ENCODE measurements at regions of chr14 and their contacts with region 1.

Region 1: DNA sequence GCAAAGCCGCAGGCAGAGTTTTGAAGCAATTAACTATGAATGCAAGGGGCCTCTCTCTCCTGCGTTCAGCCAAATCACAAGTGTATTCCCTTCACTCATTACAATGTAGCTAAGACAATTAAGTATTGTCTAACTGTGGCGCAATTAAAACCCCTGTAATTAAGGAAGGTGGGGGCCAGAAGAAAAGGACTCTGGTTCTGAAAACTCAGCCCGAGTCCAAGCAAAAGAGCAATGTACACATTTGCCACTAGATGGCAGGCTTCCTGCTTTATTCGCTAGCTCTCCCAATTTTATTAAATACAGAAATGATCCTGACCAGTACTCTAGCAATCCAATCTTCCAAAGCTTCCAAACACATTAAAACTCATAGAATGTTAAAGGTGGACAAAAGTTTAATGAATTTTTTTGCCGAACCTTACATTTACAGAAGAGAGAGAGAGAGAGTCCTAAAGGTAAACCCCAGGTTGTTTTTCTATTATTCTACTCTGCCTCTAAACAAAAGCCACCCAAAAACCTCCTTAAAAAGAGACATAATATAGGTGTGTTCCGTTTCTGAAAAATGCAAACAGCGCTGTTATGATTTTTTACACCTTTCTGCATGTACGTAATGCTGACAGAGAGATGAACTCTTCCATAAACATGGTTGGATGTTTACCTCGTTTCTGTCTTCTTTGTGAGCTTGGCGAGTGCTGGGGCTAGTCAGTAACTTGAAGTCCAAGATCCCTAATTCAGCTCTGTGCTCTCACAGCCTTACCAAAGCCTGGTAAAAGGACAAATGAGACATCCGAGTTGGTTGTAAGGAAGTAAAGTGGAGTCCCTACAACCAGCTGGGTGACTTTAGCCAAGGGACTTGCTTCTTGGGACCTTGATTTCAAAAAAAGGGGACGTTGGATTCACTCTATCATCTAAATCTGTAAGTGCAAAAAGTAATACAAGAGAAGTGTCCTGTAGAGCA is 50.9 kb upstream of the VASH1 start:
- DNase-seq: peak; percentile 59
- ATAC-seq: peak; percentile 88
- H3K4me3 ChIP-seq: no peak overlapping the region
- H3K27ac ChIP-seq: no peak overlapping the region
- H3K4me1 ChIP-seq: no peaks in the 10 kb centered on the region
- H3K27me3 ChIP-seq: peaks cover 2% of the 10 kb centered on the region; the same call in 1 of the 2 replicates
- CTCF ChIP-seq: peak; percentile 72
- POLR2A ChIP-seq: no peak
- RAD21 ChIP-seq: peak; percentile 80

Region 2: GRCh38 chr14:76761136-76761959 is 51.0 kb after region 1 on chr14 and contains the start of gene VASH1:
- CTCF ChIA-PET with region 1: interaction called, 6 read pairs
- POLR2A ChIA-PET with region 1: no interaction called
- dilution Hi-C with region 1: no loop called
- in situ Hi-C with region 1: no loop called
- intact Hi-C with region 1: loop called (anchors 1 kb)
- DNase-seq: peak; percentile 76
- ATAC-seq: peak; percentile 92
- H3K4me3 ChIP-seq: peak within 1 kb of the TSS; percentile 87
- H3K27ac ChIP-seq: peak within 1 kb of the TSS; percentile 80
- H3K4me1 ChIP-seq: peaks cover 8% of the 10 kb centered on the region; the same call in 1 of the 2 replicates
- H3K27me3 ChIP-seq: no peaks in the 10 kb centered on the region; the same call in 1 of the 2 replicates
- CTCF ChIP-seq: 0 out of 2 replicates have a peak, but pooled peaks have one; percentile 6
- POLR2A ChIP-seq: no peak
- RAD21 ChIP-seq: no peak
- total RNA-seq, gene VASH1: 1.9 and 2.0 TPM in 2 replicates

Region 3: GRCh38 chr14:76784266-76785264 is 74.2 kb after region 1 on chr14:
- CTCF ChIA-PET with region 1: interaction called, 17 read pairs
- POLR2A ChIA-PET with region 1: no interaction called
- dilution Hi-C with region 1: no loop called
- in situ Hi-C with region 1: loop called (anchors 5 kb)
- intact Hi-C with region 1: loop called (anchors 1 kb)
- DNase-seq: peak; percentile 75
- ATAC-seq: peak; percentile 96
- H3K4me3 ChIP-seq: no peak overlapping the region
- H3K27ac ChIP-seq: no peak overlapping the region
- H3K4me1 ChIP-seq: peaks cover 4% of the 10 kb centered on the region; the same call in 1 of the 2 replicates
- H3K27me3 ChIP-seq: no peaks in the 10 kb centered on the region
- CTCF ChIP-seq: peak; percentile 96
- POLR2A ChIP-seq: no peak
- RAD21 ChIP-seq: peak; percentile 84

Region 4: GRCh38 chr14:76810953-76811400 is 100.6 kb after region 1 on chr14:
- CTCF ChIA-PET with region 1: interaction called, 15 read pairs
- POLR2A ChIA-PET with region 1: no interaction called
- dilution Hi-C with region 1: no loop called
- in situ Hi-C with region 1: no loop called
- intact Hi-C with region 1: loop called (anchors 1 kb)
- DNase-seq: peak; percentile 34
- ATAC-seq: peak; percentile 57
- H3K4me3 ChIP-seq: peak overlapping the region; percentile 22; the same call in 1 of the 2 replicates
- H3K27ac ChIP-seq: no peak overlapping the region
- H3K4me1 ChIP-seq: no peaks in the 10 kb centered on the region
- H3K27me3 ChIP-seq: no peaks in the 10 kb centered on the region
- CTCF ChIP-seq: peak; percentile 51
- POLR2A ChIP-seq: no peak
- RAD21 ChIP-seq: peak; percentile 57

Region 5: DNA sequence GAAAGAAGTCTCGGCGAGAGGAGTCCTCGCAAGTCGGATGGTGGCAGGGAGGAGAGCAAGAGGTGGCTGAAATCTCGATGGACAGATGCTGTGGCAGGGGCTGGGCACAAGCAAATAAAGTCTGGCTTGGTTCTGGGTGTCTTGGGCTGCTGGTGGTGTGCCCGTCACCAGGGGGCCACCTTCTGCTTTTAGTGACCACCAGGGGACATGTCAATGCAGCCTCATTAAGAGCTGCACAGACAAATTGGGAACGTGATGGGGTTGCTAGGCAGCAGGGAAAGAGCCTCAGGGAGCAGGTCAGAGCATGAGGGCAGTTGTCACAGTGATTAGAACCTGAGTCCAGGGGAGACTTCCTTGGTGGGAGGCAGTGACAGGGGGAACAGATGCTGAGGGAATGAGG is 159.8 kb after region 1 on chr14:
- CTCF ChIA-PET with region 1: no interaction called
- POLR2A ChIA-PET with region 1: no interaction called
- dilution Hi-C with region 1: no loop called
- in situ Hi-C with region 1: no loop called
- intact Hi-C with region 1: loop called (anchors 2 kb)
- DNase-seq: no peak
- ATAC-seq: no peak
- H3K4me3 ChIP-seq: no peak overlapping the region
- H3K27ac ChIP-seq: no peak overlapping the region
- H3K4me1 ChIP-seq: no peaks in the 10 kb centered on the region
- H3K27me3 ChIP-seq: peaks cover 28% of the 10 kb centered on the region
- CTCF ChIP-seq: peak; percentile 29; the same call in 1 of the 2 replicates
- POLR2A ChIP-seq: no peak
- RAD21 ChIP-seq: 0 out of 2 replicates have a peak, but pooled peaks have one; percentile 15

Region 6: GRCh38 chr14:77097700-77098528 is 387.6 kb after region 1 on chr14 and contains the start of gene CIPC:
- CTCF ChIA-PET with region 1: no interaction called
- POLR2A ChIA-PET with region 1: no interaction called
- dilution Hi-C with region 1: no loop called
- in situ Hi-C with region 1: no loop called
- intact Hi-C with region 1: loop called (anchors 2 kb)
- DNase-seq: peak; percentile 98
- ATAC-seq: peak; percentile 95
- H3K4me3 ChIP-seq: peak within 1 kb of the TSS; percentile 82
- H3K27ac ChIP-seq: peak within 1 kb of the TSS; percentile 93
- H3K4me1 ChIP-seq: peaks cover 6% of the 10 kb centered on the region
- H3K27me3 ChIP-seq: no peaks in the 10 kb centered on the region
- CTCF ChIP-seq: no peak
- POLR2A ChIP-seq: peak; percentile 82
- RAD21 ChIP-seq: no peak
- total RNA-seq, gene CIPC: 12.9 and 13.1 TPM in 2 replicates

Region 7: GRCh38 chr14:77457115-77457521 is 746.8 kb after region 1 on chr14:
- CTCF ChIA-PET with region 1: no interaction called
- POLR2A ChIA-PET with region 1: no interaction called
- dilution Hi-C with region 1: no loop called
- in situ Hi-C with region 1: no loop called
- intact Hi-C with region 1: no loop called
- DNase-seq: peak; percentile 40
- ATAC-seq: peak; percentile 19
- H3K4me3 ChIP-seq: peak overlapping the region; percentile 69
- H3K27ac ChIP-seq: peak overlapping the region; percentile 62
- H3K4me1 ChIP-seq: peaks cover 3% of the 10 kb centered on the region
- H3K27me3 ChIP-seq: no peaks in the 10 kb centered on the region
- CTCF ChIP-seq: no peak
- POLR2A ChIP-seq: no peak; the same call in 1 of the 2 replicates
- RAD21 ChIP-seq: no peak